ENCODE measurements at regions of chr7 and their contacts with region 1.

Region 1: DNA sequence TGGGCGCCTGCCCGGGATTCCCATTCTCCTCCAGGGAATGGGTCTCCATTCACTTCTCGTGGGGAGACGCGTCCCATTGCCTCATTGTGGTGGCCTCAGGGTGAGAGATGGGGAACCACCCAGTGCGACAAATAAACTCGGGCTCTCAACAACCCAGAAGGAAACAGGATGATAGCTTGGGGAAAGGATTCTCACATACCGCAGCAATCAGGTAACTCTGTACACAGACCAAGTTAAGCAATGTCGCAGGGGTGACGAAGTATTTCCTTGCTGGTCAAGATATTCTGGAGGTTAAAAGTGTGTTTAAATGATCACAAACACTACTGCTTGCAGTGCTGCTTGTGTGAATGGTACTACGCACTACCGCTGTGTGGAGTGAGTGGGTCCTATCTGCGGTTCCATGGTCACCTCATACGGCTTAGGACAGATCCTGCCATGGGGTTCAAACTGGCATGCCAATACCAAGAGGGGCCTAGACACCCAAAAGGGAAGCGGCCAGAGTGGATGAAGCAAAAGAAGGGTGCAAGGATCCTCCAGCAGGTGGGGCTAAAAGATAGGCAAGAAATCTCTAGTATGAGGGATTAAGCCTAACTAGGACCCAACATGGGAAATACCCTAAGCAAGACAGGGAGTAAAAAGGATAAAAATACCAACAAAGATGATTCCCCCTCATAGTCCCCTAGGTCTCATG is 143.8 kb upstream of the TMEM106B start:
- DNase-seq: peak; percentile 89
- H3K4me3 Mint-ChIP-seq: peak overlapping the region; percentile 46
- H3K27ac Mint-ChIP-seq: peak overlapping the region; percentile 98
- H3K4me1 Mint-ChIP-seq: peaks cover 40% of the 10 kb centered on the region
- H3K27me3 Mint-ChIP-seq: no peaks in the 10 kb centered on the region
- CTCF ChIP-seq: peak; percentile 85

Region 2: DNA sequence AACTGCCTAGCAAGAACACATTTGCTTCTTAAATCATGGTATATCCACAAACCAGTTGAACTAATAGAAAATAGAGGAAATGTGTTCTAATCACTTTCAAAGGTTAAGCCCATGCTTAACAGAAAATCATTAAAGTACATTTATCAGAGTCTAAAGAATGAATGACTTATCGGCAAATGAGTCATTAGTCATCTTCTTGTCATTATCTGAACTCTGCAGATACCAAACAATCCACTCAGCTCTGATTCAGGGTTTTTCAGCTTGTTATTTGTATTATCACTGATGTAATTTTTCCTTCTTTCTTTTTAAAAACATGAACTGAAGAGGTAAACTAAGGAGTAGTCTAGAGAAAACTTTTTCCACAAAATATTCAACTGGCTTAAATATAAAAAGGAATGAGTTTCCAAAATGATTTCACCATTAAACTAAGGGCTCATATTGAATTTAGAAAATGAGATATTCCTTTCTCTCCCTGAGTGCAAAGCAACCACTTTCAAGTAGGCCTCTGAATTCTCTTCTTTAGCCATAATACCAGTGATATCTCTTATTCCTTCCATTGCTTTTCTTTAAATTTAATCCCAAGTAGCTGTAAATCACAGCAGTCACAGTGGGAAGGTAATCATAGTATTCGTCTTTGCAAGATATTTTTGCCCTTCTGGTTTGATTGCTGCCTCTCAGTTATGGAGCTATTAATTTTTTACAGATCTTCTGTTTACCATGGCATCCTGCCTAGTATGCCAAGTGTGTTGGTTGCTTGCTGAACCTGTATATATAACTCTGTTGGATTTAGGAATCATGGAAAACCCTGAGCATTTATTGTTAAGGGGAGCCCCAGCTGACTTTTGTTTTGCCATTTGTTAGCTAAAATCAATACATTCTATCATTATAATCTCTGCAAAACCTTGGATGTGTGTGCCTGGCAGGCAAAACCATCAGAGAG is 360.4 kb before region 1 on chr7:
- CTCF ChIA-PET with region 1: no interaction called
- intact Hi-C with region 1: loop called (anchors 10 kb)
- DNase-seq: peak; percentile 59
- H3K4me3 Mint-ChIP-seq: peak overlapping the region; percentile 13
- H3K27ac Mint-ChIP-seq: peak overlapping the region; percentile 27
- H3K4me1 Mint-ChIP-seq: peaks cover 24% of the 10 kb centered on the region
- H3K27me3 Mint-ChIP-seq: no peaks in the 10 kb centered on the region
- CTCF ChIP-seq: no peak

Region 3: DNA sequence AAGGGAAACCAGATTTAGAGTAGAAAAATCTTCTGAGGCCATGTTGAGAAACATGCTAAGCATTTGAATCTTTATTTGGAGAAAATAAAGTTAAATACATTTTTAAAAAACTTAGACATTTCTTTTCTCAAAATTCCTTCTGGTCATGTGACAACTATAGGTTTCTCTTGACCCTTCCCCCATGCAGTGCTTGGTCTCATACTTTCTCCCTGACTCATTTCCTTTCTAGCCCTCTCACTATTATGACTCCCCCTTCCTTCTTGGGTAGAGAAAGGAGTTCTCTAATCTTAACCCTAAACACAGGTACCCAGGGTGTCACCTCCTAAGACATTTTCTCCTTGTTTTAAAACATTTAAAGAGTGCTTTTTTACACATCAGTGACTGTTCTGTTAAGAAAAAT is 35.6 kb before region 1 on chr7:
- CTCF ChIA-PET with region 1: interaction called, 4 read pairs
- intact Hi-C with region 1: loop called (anchors 1 kb)
- DNase-seq: peak; percentile 74
- H3K4me3 Mint-ChIP-seq: peak overlapping the region; percentile 31
- H3K27ac Mint-ChIP-seq: peak overlapping the region; percentile 98
- H3K4me1 Mint-ChIP-seq: peaks cover 46% of the 10 kb centered on the region
- H3K27me3 Mint-ChIP-seq: no peaks in the 10 kb centered on the region
- CTCF ChIP-seq: no peak

Region 4: DNA sequence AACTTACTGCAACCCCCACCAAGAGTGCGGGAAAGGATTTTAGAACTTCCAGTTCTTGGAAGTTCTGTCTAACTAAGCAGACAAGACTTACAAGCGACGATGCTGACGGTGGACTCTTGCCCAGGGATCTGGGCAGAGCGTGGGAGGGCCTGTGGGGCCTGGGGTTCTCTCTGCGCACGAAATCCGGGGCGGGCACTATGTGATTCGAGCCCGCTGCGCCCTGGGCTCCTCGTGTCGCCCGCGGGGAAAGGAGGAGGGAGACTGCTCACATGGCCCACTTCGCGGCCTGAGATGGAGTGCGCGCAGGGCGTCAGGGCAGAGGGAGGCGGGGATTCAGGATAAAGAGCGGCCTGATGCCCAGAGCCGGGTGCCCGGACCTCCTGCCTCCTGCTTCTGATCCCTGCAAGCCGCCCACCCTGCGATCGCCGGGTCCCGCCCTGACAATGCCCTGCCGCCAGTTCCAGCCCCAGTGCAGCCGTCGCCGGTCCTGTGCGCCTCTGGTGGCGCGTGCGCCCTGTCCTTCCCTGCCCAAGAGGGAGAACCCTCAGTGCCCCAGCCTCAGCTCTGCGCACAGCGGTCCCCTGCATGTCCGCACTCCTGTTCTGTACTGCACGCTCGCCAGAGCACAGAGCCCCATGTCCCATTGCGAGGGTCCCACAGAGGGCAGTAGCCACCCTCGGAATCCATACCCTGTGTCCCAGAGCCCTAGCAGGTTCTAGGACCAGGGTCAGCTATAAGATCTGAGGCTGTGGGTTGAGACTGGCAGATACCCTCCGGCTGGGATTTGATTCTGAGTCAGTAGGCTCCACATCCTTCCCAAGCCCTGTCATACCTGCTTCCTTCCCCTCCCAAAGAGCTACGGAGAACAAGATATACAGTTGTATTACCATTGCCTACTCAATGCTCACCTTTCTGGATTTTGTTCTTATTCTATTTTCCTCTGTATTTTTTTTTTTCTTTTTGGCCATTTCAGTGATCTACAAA is 44.4 kb after region 1 on chr7:
- CTCF ChIA-PET with region 1: no interaction called
- intact Hi-C with region 1: no loop called
- DNase-seq: peak; percentile 69
- H3K4me3 Mint-ChIP-seq: peak overlapping the region; percentile 86
- H3K27ac Mint-ChIP-seq: peak overlapping the region; percentile 27
- H3K4me1 Mint-ChIP-seq: peaks cover 47% of the 10 kb centered on the region
- H3K27me3 Mint-ChIP-seq: no peaks in the 10 kb centered on the region
- CTCF ChIP-seq: no peak

Region 5: DNA sequence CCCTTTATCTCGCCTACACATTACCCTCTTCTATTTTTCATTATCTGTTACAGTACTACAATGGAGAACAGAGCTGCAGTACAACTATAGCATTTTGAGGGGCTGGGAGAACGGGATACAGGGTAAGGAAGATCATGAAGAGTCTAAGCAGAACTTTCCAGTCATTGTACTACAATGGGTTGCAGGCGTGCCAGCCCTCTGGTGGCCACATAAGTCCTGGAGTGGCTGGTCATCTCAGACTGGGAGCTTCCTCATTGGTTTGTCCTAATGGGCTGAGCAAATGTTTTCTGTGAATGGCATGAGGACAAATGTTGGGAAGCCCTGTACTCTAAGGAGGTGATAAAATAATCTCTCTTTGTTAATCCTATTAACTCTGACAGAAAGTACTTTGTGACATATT is 176.8 kb after region 1 on chr7:
- CTCF ChIA-PET with region 1: interaction called, 7 read pairs
- intact Hi-C with region 1: loop called (anchors 1 kb)
- DNase-seq: peak; percentile 70
- H3K4me3 Mint-ChIP-seq: no peak overlapping the region
- H3K27ac Mint-ChIP-seq: no peak overlapping the region
- H3K4me1 Mint-ChIP-seq: no peaks in the 10 kb centered on the region
- H3K27me3 Mint-ChIP-seq: no peaks in the 10 kb centered on the region
- CTCF ChIP-seq: peak; percentile 71

Region 6: DNA sequence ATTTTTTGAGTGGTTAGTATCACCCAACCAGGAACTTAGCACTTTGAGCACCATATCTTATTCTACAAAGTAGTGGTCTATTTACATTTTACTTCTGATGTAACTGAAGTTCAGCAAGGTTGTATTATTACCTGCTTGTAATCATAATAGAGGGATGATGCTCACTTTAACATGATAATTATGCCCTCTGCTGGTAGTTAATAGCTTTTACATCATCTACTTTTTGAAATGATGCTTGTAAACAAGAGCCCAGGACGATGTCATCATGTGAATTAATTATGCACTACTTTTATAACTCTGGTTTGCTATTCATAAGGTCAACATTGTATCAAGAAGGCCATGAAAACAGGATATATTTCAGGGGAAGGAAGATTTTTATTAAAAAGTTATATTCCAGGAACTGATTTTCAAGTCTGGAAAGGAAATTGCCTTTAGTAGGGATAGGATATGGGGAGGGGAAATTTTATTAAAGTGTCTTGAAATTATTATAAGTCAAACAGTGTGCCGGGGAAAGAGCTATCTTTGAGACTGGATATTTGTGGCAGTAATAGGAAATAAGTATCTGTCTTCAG is 422.9 kb after region 1 on chr7:
- CTCF ChIA-PET with region 1: no interaction called
- intact Hi-C with region 1: loop called (anchors 1 kb)
- DNase-seq: no peak
- H3K4me3 Mint-ChIP-seq: no peak overlapping the region
- H3K27ac Mint-ChIP-seq: no peak overlapping the region
- H3K4me1 Mint-ChIP-seq: peaks cover 18% of the 10 kb centered on the region
- H3K27me3 Mint-ChIP-seq: no peaks in the 10 kb centered on the region
- CTCF ChIP-seq: peak; percentile 53

Measured in Calu3 (cell line).